PC-3 (cell line): ENCODE measurements at regions of chr1 and their contacts with region 1.

Region 1: GRCh38 chr1:246689409-246690008 is 34.7 kb upstream of the SCCPDH start:
- DNase-seq: peak; percentile 96
- ATAC-seq: peak; percentile 97
- H3K4me3 ChIP-seq: peak overlapping the region; percentile 63
- H3K27ac ChIP-seq: no peak overlapping the region
- H3K4me1 ChIP-seq: 0 out of 2 replicates have a peak, but pooled peaks cover 5% of the 10 kb centered on the region
- H3K27me3 ChIP-seq: no peaks in the 10 kb centered on the region
- CTCF ChIP-seq: peak; percentile 94

Region 2: DNA sequence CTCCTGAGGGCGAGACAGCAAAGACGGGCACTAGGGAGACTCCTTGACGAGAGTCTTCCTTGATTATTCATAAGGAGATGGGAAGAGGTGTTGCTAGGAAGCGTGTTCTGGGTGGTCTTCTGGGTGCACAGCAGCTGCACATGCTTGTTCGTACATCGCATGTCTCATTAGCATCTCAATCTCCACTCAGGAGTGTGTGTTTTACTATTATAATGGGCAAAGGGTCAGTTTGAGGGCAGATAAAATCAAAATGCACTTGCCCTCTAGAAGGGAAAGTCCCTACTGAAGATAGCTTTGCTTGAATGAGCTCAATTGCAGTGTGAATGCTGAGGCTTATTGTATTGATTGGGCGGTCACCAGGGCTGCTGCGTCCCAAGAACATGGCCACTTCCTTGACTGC is 15.5 kb before region 1 on chr1:
- CTCF ChIA-PET with region 1: no interaction called
- POLR2A ChIA-PET with region 1: no interaction called
- intact Hi-C with region 1: no loop called
- DNase-seq: no peak
- ATAC-seq: no peak
- H3K4me3 ChIP-seq: no peak overlapping the region
- H3K27ac ChIP-seq: no peak overlapping the region
- H3K4me1 ChIP-seq: no peaks in the 10 kb centered on the region
- H3K27me3 ChIP-seq: no peaks in the 10 kb centered on the region
- CTCF ChIP-seq: no peak

Region 3: GRCh38 chr1:246753670-246754535 is 64.4 kb after region 1 on chr1:
- CTCF ChIA-PET with region 1: no interaction called
- POLR2A ChIA-PET with region 1: interaction called, 4 read pairs
- intact Hi-C with region 1: loop called (anchors 1 kb)
- DNase-seq: peak; percentile 81
- ATAC-seq: peak; percentile 95
- H3K4me3 ChIP-seq: no peak overlapping the region
- H3K27ac ChIP-seq: no peak overlapping the region
- H3K4me1 ChIP-seq: no peaks in the 10 kb centered on the region
- H3K27me3 ChIP-seq: no peaks in the 10 kb centered on the region
- CTCF ChIP-seq: peak; percentile 94